ENCODE measurements at regions of chr9 and their contacts with region 1.

Region 1: DNA sequence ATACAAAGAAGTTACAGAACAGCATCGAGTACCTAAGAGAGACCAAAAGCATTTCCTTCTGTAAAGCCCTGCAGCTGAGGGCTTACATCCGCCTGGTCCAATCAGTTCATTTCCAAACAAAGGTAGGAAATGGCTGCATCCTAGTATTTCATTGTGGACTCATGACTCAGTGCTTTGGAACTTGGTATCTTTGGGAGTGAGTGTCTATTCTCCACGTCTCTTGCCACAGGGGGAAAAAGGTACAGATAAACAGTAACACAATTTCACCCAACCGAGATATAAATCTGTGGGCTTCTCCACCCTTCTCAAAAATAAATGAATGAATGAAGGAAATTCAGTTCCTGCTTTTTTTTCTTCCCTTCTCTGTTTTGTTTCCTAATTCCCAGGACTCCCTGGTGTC is 75.4 kb downstream of the NFIB start:
- DNase-seq: no peak
- ATAC-seq: peak; percentile 83 to 92
- H3K4me3 ChIP-seq: no peak overlapping the region
- H3K27ac ChIP-seq: no peak overlapping the region
- H3K4me1 ChIP-seq: peaks cover 16% of the 10 kb centered on the region
- H3K27me3 ChIP-seq: no peaks in the 10 kb centered on the region

Region 2: GRCh38 chr9:14107977-14108376 is 130.6 kb before region 1 on chr9:
- intact Hi-C with region 1: loop called in 1 of 4 experiments (anchors 10 kb)
- DNase-seq: no peak
- ATAC-seq: peak; percentile 74 to 95
- H3K4me3 ChIP-seq: no peak overlapping the region
- H3K27ac ChIP-seq: no peak overlapping the region
- H3K4me1 ChIP-seq: no peaks in the 10 kb centered on the region
- H3K27me3 ChIP-seq: no peaks in the 10 kb centered on the region